Breast epithelium (tissue), 4 donors: ENCODE measurements at regions of chr6 and their contacts with region 1.

Region 1: DNA sequence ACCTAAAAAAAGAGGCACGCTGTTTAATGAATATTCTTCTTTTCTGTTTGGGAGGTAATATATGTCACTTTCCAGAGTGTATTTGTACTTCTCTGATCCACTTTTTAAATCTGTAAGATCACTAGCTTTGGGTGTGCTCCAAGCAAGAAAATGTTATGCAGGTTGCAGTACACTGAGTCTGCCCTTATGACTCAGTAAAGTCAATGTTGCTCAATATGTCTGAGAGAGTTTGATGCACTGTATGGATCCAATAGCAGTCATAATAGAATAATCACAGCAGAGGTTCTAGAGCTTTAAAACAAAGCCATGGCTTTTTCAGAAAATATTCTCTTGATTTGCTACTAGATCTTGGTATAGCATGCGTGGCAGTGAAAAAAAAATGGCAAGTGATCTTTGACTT is 525.3 kb upstream of the HTR1E start:
- DNase-seq: no peak
- H3K4me3 ChIP-seq: no peak overlapping the region
- H3K27ac ChIP-seq: no peak overlapping the region
- H3K4me1 ChIP-seq: no peaks in the 10 kb centered on the region
- H3K27me3 ChIP-seq: no peaks in the 10 kb centered on the region
- CTCF ChIP-seq: no peak
- POLR2A ChIP-seq: no peak

Region 2: GRCh38 chr6:85772641-85773040 is 639.4 kb before region 1 on chr6:
- intact Hi-C with region 1: loop called (anchors 10 kb)
- DNase-seq: no peak
- H3K4me3 ChIP-seq: no peak overlapping the region
- H3K27ac ChIP-seq: no peak overlapping the region
- H3K4me1 ChIP-seq: no peaks in the 10 kb centered on the region
- H3K27me3 ChIP-seq: no peaks in the 10 kb centered on the region
- CTCF ChIP-seq: no peak
- POLR2A ChIP-seq: no peak

Region 3: DNA sequence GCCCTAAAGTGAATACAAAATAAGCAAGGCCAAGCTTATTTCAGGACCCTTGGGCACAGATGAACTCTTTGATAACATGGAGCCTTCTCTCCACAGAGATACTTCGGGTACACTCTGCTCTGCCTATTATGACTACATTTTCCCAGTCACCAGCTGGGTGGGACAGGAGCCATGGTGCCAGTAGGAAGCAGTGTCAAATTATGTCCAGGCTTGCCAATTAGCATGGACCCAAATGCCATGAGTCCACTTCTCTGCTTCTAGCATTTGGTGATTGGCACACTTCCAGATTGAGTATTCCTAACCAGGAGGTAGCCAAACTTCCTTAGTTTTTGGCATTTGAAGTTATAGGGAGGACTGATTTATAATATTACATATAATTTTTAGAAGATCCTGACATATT is 11.5 kb after region 1 on chr6:
- intact Hi-C with region 1: no loop called
- DNase-seq: no peak
- H3K4me3 ChIP-seq: no peak overlapping the region
- H3K27ac ChIP-seq: no peak overlapping the region
- H3K4me1 ChIP-seq: no peaks in the 10 kb centered on the region
- H3K27me3 ChIP-seq: no peaks in the 10 kb centered on the region
- CTCF ChIP-seq: no peak
- POLR2A ChIP-seq: no peak

Region 4: GRCh38 chr6:86440608-86441007 is 28.6 kb after region 1 on chr6:
- intact Hi-C with region 1: no loop called
- DNase-seq: no peak
- H3K4me3 ChIP-seq: no peak overlapping the region
- H3K27ac ChIP-seq: no peak overlapping the region
- H3K4me1 ChIP-seq: no peaks in the 10 kb centered on the region
- H3K27me3 ChIP-seq: no peaks in the 10 kb centered on the region
- CTCF ChIP-seq: no peak
- POLR2A ChIP-seq: no peak